Endothelial cell of umbilical vein (primary cell): ENCODE measurements at regions of chr2 and their contacts with region 1.

Region 1: GRCh38 chr2:219530048-219530963 is 13.3 kb downstream of the CHPF start:
- DNase-seq: peak; percentile 79
- H3K4me3 ChIP-seq: no peak overlapping the region
- H3K27ac ChIP-seq: no peak overlapping the region
- H3K4me1 ChIP-seq: no peaks in the 10 kb centered on the region
- H3K27me3 ChIP-seq: peaks cover 30 to 38% of the 10 kb centered on the region in 2 experiments
- CTCF ChIP-seq: peak; percentile 90 to 94
- POLR2A ChIP-seq: no peak

Region 2: GRCh38 chr2:219388127-219388844 is 142.0 kb before region 1 on chr2:
- CTCF ChIA-PET with region 1: interaction called, 16 read pairs
- POLR2A ChIA-PET with region 1: no interaction called
- dilution Hi-C with region 1: no loop called
- intact Hi-C with region 1: no loop called
- DNase-seq: peak; percentile 96
- H3K4me3 ChIP-seq: peak overlapping the region in 2 of 3 experiments; percentile 46 to 55
- H3K27ac ChIP-seq: no peak overlapping the region
- H3K4me1 ChIP-seq: peaks cover 9% of the 10 kb centered on the region
- H3K27me3 ChIP-seq: peaks cover 2% of the 10 kb centered on the region in 2 experiments
- CTCF ChIP-seq: peak; percentile 47 to 56
- POLR2A ChIP-seq: no peak

Region 3: GRCh38 chr2:219441451-219442255 is 88.7 kb before region 1 on chr2:
- CTCF ChIA-PET with region 1: interaction called, 30 read pairs
- POLR2A ChIA-PET with region 1: no interaction called
- dilution Hi-C with region 1: no loop called
- intact Hi-C with region 1: no loop called
- DNase-seq: no peak
- H3K4me3 ChIP-seq: peak overlapping the region in 1 of 3 experiments; percentile 41
- H3K27ac ChIP-seq: no peak overlapping the region
- H3K4me1 ChIP-seq: peaks cover 4% of the 10 kb centered on the region
- H3K27me3 ChIP-seq: peaks cover 18 to 31% of the 10 kb centered on the region in 2 experiments
- CTCF ChIP-seq: no peak
- POLR2A ChIP-seq: no peak

Region 4: DNA sequence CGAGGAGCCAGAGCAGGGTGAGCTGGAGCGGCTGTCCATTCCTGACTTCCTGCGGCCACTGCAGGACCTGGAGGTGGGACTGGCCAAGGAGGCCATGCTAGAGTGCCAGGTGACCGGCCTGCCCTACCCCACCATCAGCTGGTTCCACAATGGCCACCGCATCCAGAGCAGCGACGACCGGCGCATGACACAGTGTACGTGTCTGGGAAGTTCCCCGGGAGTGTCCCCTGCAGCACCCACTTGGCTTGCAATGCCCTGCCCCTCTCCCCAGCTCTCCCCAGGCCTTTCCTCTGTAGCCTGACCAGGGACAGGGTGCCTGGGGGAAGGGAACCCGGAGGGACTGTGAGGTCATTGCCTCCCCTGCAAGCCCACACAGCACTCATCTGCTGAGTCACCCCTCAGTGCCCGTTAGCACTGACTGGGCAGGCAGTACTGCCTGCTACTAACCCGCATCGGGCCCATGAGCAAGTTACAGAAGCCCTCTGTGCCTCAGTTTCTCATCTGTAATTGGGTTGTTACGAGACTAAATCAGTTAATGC is 61.1 kb before region 1 on chr2:
- CTCF ChIA-PET with region 1: interaction called, 115 read pairs
- POLR2A ChIA-PET with region 1: no interaction called
- dilution Hi-C with region 1: no loop called
- intact Hi-C with region 1: no loop called
- DNase-seq: no peak
- H3K4me3 ChIP-seq: no peak overlapping the region
- H3K27ac ChIP-seq: no peak overlapping the region
- H3K4me1 ChIP-seq: no peaks in the 10 kb centered on the region
- H3K27me3 ChIP-seq: no peaks in the 10 kb centered on the region
- CTCF ChIP-seq: no peak
- POLR2A ChIP-seq: no peak

Region 5: DNA sequence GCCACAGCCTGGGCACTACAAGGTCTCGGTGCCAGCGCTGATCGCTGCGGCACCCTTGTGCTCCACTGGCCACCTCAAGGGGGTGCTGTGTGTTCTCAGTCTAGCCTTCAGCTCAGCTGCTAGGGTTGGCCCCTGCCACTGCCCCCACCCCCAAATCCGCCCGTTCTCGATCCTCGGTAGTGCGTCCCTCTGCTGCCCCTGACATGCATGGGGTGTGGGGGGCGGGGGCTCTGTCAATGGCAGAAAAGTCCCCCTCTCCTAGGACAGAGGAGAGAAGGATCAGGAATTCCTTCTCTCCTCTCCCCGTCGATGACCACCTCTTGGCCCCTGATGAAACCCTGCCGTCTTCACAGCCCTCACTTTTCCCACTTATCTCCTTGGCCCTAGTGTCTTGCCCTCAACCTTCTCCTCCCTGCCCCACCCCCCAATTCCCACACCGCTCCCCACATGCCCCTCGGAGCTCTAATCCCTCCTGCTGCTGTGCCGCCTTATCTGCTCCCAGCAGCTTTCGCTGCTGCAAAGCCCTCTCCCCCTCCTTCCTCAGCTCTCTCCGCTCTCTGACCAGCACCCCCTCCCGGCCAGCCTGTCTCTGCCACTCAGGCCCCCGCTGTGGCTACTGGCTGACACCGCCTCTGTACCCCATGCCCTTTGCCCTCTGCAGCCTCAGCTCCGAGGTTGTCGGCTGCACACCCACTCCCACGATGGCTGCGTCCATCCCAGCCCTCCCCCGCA is 20.4 kb before region 1 on chr2:
- CTCF ChIA-PET with region 1: interaction called, 99 read pairs
- POLR2A ChIA-PET with region 1: no interaction called
- dilution Hi-C with region 1: no loop called
- intact Hi-C with region 1: no loop called
- DNase-seq: peak; percentile 60
- H3K4me3 ChIP-seq: peak overlapping the region in 1 of 3 experiments; percentile 1
- H3K27ac ChIP-seq: no peak overlapping the region
- H3K4me1 ChIP-seq: no peaks in the 10 kb centered on the region
- H3K27me3 ChIP-seq: peaks cover 42 to 43% of the 10 kb centered on the region in 2 experiments
- CTCF ChIP-seq: peak; percentile 68 to 84
- POLR2A ChIP-seq: no peak

Region 6: DNA sequence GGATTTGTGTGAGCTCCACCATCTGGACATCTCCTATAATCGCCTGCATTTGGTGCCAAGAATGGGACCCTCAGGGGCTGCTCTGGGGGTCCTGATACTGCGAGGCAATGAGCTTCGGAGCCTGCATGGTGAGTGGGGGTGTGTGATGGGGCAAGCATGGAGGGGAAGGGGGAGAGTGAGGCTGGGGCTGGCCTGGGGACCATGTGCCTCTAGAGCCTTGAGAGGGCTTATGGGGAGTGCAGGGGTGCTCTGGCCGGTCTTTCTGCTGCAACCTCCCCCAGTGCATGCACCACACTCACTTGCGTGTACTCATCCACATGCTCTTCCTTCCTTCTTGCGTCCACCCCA is 75.3 kb after region 1 on chr2:
- CTCF ChIA-PET with region 1: no interaction called
- POLR2A ChIA-PET with region 1: no interaction called
- dilution Hi-C with region 1: no loop called
- intact Hi-C with region 1: no loop called
- DNase-seq: no peak
- H3K4me3 ChIP-seq: no peak overlapping the region
- H3K27ac ChIP-seq: no peak overlapping the region
- H3K4me1 ChIP-seq: no peaks in the 10 kb centered on the region
- H3K27me3 ChIP-seq: no peaks in the 10 kb centered on the region
- CTCF ChIP-seq: no peak
- POLR2A ChIP-seq: no peak

Region 7: GRCh38 chr2:219713108-219713507 is 182.8 kb after region 1 on chr2:
- CTCF ChIA-PET with region 1: no interaction called
- POLR2A ChIA-PET with region 1: no interaction called
- dilution Hi-C with region 1: no loop called
- intact Hi-C with region 1: no loop called
- DNase-seq: peak; percentile 15
- H3K4me3 ChIP-seq: no peak overlapping the region
- H3K27ac ChIP-seq: no peak overlapping the region
- H3K4me1 ChIP-seq: no peaks in the 10 kb centered on the region
- H3K27me3 ChIP-seq: no peaks in the 10 kb centered on the region
- CTCF ChIP-seq: no peak
- POLR2A ChIP-seq: no peak